HepG2 (cell line): ENCODE measurements at regions of chr10 and their contacts with region 1.

Region 1: DNA sequence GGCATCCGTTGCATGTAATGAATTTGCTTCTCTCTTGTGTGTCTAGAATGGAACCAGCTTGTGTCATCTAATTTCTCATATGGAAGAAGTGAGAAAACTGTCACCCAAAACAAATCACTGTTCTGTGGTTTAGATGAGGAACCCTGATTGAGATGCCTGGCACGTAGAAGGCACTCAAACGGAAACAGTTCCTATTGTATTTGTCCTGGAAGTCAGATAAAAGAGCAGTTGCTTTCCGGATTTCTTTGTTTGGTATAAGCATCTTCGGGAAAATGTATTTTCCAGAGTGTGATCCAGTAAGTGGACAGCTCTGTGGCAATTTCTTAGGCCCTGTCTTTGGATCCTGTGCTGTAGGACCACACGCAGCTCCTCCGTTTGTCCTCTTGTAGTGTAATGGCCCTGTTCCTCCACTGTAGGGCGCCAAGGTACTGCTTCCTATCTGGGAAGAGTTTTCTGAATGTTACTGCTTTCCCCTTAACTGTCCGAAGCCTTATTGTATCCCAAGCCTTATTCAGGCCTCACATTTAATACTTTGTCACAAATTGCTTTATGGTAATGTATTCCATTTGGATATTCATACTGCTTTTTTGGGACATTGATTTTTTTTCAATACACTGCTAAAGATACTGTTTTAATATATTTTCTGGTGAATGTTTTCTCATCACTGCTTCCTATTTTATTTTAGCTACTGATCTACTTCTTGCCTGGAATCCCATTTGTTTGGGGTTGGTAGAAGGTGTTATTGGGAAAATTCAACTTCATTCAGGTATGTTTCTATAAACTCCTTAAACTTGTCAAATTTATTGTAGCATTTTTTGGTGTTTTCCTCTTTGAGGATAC is 24.8 kb downstream of the INPP5F start:
- DNase-seq: peak; percentile 73
- ATAC-seq: peak; percentile 83
- H3K4me3 ChIP-seq: no peak overlapping the region
- H3K27ac ChIP-seq: no peak overlapping the region
- H3K4me1 ChIP-seq: peaks cover 40% of the 10 kb centered on the region
- H3K27me3 ChIP-seq: no peaks in the 10 kb centered on the region
- CTCF ChIP-seq: peak; percentile 92
- EP300 ChIP-seq: no peak
- POLR2A ChIP-seq: no peak
- RAD21 ChIP-seq: peak; percentile 91

Region 2: GRCh38 chr10:119616882-119617570 is 133.6 kb before region 1 on chr10:
- CTCF ChIA-PET with region 1: no interaction called
- POLR2A ChIA-PET with region 1: no interaction called
- in situ Hi-C with region 1: no loop called
- intact Hi-C with region 1: loop called (anchors 10 kb)
- DNase-seq: peak; percentile 50
- ATAC-seq: peak; percentile 79
- H3K4me3 ChIP-seq: no peak overlapping the region
- H3K27ac ChIP-seq: no peak overlapping the region
- H3K4me1 ChIP-seq: peaks cover 52% of the 10 kb centered on the region
- H3K27me3 ChIP-seq: peaks cover 0 to 3% of the 10 kb centered on the region in 2 experiments; a peak in 1 of 5 replicates
- CTCF ChIP-seq: peak; percentile 79
- EP300 ChIP-seq: no peak
- POLR2A ChIP-seq: no peak
- RAD21 ChIP-seq: peak; percentile 59; the same call in 1 of the 2 replicates

Region 3: DNA sequence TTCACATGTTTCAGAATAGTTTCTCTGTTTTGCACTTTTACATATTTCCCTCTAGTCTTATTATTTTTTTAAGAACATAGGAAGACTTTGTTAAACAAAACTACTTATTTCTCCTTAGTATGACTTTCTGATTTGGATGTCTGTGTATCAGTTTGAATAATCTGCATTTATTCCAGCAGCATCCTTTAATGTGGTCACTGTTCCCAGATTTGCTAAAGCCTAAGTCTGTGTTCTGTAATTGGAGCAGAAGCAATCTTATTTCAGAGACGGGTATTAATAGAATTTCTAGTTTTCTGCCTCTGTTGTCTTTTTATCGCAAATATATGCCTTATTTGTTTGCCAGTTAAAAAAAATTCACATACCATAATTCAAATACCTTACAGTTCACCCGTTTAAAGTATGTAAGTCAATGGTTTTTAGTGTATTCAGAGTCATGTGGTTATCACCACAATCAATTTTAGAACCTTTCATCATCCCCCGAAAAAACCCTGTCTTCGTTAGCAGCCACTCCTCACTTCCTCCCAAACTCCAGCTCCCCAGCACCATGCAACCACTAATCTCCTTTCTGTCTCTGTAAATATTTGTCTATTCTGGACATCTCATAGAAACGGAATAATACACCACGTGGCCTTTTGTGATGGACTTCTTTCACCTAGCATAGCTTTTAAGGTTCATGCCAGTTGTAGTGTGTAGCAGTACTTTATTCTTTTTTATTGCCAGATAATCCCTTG is 33.9 kb after region 1 on chr10:
- CTCF ChIA-PET with region 1: no interaction called
- POLR2A ChIA-PET with region 1: no interaction called
- in situ Hi-C with region 1: no loop called
- intact Hi-C with region 1: loop called (anchors 5 kb)
- DNase-seq: peak; percentile 90
- ATAC-seq: peak; percentile 91
- H3K4me3 ChIP-seq: no peak overlapping the region; a peak in 1 of 6 replicates
- H3K27ac ChIP-seq: peak overlapping the region; percentile 5
- H3K4me1 ChIP-seq: peaks cover 41% of the 10 kb centered on the region
- H3K27me3 ChIP-seq: no peaks in the 10 kb centered on the region
- CTCF ChIP-seq: no peak
- EP300 ChIP-seq: peak in 1 of 2 experiments; percentile 73; a peak in 2 of 4 replicates
- POLR2A ChIP-seq: no peak
- RAD21 ChIP-seq: no peak

Region 4: GRCh38 chr10:119826771-119827170 is 76.2 kb after region 1 on chr10:
- CTCF ChIA-PET with region 1: no interaction called
- POLR2A ChIA-PET with region 1: no interaction called
- in situ Hi-C with region 1: no loop called
- intact Hi-C with region 1: loop called (anchors 5 kb)
- DNase-seq: no peak
- ATAC-seq: no peak
- H3K4me3 ChIP-seq: no peak overlapping the region
- H3K27ac ChIP-seq: no peak overlapping the region
- H3K4me1 ChIP-seq: no peaks in the 10 kb centered on the region
- H3K27me3 ChIP-seq: no peaks in the 10 kb centered on the region; a peak in 1 of 5 replicates
- CTCF ChIP-seq: no peak
- EP300 ChIP-seq: no peak
- POLR2A ChIP-seq: no peak
- RAD21 ChIP-seq: no peak

Region 5: DNA sequence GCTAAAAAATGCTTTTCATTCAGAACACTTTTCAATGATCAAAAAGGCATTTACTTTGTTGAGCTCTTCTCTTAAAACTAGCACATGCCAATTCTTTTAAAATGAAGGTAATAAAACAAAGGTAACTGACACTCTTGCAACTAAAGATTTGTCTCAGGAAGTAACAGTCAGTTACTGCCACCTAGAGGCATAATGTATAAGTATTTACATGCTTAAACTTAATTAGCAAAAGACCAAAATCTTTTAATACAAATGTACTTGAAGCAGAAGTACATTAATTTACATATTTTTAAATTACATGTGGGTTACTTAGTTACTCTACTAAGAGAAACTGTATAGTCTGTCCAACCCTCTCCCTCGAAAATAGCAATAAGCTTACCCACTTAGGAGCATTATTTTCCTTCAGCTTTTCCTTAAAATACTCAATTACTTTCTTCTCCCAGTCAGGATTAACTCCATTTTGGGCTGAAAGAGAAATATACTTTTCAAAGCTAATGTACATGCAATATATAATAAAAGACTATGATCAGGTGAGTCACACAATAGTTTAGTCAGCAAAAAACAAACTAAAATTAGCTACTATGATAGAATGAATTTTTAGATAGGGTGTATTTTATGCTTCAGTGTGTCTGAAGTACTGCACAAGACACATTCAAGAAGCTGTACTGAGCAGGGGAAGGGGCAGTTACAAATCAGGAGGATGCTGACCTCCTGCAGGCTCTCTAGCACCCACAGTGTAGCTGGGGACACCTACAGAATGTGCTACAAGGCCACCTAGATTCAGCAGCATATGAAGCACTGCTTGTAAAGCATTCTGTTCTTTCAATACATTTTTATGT is 109.0 kb after region 1 on chr10:
- CTCF ChIA-PET with region 1: interaction called, 22 read pairs
- POLR2A ChIA-PET with region 1: interaction called, 3 read pairs
- in situ Hi-C with region 1: loop called (anchors 5 kb)
- intact Hi-C with region 1: loop called (anchors 1 kb)
- DNase-seq: peak; percentile 44
- ATAC-seq: no peak
- H3K4me3 ChIP-seq: no peak overlapping the region
- H3K27ac ChIP-seq: no peak overlapping the region
- H3K4me1 ChIP-seq: peaks cover 26% of the 10 kb centered on the region
- H3K27me3 ChIP-seq: no peaks in the 10 kb centered on the region
- CTCF ChIP-seq: peak; percentile 64
- EP300 ChIP-seq: no peak
- POLR2A ChIP-seq: no peak
- RAD21 ChIP-seq: 0 out of 2 replicates have a peak, but pooled peaks have one; percentile 16